HEK293T (cell line): ENCODE measurements at regions of chr17 and their contacts with region 1.

Region 1: GRCh38 chr17:42019509-42020404 is at the start of gene NKIRAS2:
- DNase-seq: peak; percentile 89

Region 2: GRCh38 chr17:41844971-41845370 is 174.8 kb before region 1 on chr17:
- CTCF ChIA-PET with region 1: no interaction called
- POLR2A ChIA-PET with region 1: no interaction called
- DNase-seq: no peak

Region 3: DNA sequence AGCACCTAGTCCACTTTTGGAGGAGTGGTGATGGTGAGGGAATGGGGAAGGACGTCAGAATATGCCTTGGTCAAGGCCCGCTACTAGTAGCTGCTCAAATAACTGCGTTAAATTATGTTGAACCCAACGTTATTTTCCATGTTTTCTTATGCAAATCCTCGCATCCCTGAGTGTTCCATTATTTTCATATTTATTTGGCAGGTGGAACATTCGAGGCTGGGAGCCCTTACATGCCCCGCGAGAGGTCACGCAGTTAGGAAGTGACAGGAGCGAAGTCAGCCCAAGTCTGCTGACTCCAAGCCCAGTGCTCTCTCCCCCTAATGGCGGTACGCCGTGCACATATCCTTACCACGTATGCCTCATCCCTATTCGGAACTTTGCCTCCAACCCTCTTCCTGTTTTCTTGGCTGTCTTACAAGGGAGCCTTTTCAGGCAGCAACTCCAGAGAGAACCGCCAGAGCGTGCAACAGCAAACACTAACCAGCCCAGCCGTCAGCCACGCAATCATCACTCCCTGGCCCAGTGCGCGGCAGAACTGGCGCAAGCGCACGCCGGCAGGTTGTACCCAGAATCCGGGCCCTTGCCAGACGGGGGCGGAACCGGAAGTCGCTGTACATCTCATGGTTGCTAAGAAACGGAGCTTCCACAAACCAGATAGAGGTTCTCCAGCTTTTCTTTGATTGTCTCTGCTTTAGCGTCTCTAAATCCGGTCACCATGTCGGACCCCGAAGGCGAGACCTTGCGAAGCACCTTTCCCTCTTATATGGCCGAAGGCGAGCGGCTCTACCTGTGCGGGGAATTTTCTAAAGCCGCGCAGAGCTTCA is 89.5 kb before region 1 on chr17 and contains the start of gene ODAD4:
- CTCF ChIA-PET with region 1: no interaction called
- POLR2A ChIA-PET with region 1: interaction called, 16 read pairs
- DNase-seq: peak; percentile 99

Region 4: GRCh38 chr17:41972571-41973411 is 47.0 kb before region 1 on chr17:
- CTCF ChIA-PET with region 1: no interaction called
- POLR2A ChIA-PET with region 1: interaction called, 117 read pairs
- DNase-seq: no peak

Region 5: DNA sequence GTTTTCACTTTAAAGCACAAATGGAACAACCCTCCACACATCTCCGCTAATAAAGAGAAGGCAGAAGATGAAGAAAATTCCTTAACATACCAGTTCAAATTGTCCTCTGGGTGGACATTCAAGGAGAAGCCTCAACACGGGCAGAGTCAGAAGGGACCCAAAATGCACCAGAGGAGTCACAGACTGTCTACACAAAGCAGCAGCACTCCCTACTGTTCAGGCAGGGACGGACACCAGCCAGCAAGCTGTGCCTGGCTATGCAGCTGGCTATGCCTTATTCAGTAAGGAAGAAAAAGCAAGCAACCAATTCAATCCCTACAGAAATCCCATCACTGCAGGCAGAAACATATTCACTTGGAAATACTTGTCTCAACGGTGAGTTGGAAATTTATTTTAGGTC is 10.6 kb before region 1 on chr17:
- CTCF ChIA-PET with region 1: no interaction called
- POLR2A ChIA-PET with region 1: interaction called, 34 read pairs
- DNase-seq: no peak

Region 6: GRCh38 chr17:42055496-42055895 is 35.7 kb after region 1 on chr17:
- CTCF ChIA-PET with region 1: interaction called, 4 read pairs
- POLR2A ChIA-PET with region 1: interaction called, 11 read pairs
- DNase-seq: no peak

Region 7: DNA sequence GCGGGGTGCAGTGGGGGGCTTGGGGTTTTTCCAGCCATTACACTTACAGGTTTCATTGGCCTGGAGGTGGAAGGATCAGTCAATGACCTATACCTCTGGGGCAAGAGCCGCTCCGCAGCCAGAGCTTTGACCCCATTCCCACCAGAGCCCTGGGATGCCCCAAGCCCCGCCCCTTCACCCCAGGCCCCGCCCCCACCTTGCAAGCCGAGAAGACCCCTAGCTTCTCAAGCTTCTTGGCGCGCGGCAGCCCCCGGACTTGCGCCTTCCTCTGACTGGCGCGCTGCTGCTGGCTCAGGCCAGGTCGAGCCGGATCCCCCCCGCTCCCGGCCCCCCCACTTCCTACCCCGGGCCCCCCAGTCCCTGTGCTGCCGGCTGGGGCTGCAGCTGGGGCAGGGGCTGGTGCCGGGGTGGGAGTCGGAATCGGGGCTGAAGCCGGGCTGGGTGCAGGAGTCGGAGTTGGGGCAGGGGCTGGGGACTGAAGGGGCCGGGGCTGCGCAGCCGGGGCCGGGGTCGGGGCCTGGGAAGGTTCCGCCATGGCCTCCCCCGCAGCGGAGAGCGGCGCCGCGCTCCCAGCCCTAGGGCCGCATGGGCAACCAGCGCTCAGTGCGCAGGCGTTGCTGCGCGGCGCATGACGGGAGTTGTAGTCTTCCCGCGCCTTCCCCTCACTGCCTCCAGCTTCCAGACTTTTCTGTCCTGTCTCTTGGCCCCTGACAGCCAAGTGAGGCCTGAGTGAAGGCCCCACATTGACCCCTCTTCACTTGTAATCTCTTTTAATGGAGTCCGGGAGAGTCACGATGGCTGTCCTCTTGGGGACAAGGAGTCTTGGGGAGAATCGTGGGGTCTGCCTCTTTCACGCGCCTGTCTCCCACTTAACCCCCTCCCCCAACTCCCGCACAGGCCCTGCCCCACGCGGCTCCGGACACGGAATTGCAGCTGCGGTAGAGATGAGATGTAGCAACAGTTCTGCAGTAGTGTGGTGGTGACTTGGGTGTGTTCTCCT is 101.3 kb after region 1 on chr17 and contains the start of gene KAT2A:
- CTCF ChIA-PET with region 1: interaction called, 4 read pairs
- POLR2A ChIA-PET with region 1: interaction called, 33 read pairs
- DNase-seq: peak; percentile 94